Psoas muscle (tissue), 8 donors: ENCODE measurements at regions of chr1 and their contacts with region 1.

Region 1: DNA sequence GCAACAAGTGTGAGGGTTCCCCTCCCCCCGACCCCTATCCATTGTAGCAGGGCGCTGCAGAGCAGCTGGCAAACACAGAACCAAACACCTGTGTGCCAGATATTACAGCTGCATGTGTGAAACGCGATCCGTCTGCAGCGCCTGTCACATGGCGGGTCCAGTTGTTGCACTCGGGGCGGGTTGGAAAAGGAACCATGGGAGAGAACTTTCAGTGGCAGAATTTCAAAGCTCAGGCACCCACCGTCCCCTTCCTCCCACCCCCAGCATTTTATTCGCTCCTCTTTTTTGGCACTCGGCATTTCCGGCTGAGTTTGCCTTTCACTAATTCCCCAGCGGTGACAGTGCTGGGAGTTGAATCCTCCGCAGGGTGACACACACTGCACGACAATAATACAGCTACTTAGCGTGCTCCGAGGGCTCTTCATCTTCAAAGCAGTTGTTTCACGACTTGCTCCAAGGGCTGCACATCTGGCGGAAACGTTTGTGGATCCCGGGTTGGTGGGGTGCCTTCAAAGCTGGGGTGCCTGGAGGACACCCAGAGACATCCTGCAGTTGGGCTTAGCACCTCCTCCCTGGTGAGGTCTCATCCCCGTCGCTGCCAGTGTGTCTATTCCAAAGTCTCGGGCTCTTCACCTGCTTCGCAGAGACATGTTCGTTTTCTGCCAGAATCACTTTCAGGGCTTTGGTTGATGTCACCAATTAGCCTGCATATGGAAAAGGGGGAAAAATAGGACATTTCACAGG is 180.7 kb downstream of the ZBTB18 start:
- DNase-seq: peak; percentile 58 to 83
- ATAC-seq: peak; percentile 82 to 90 (median 88)
- H3K4me3 ChIP-seq: peak overlapping the region; percentile 52
- H3K27ac ChIP-seq: peak overlapping the region; percentile 89
- H3K4me1 ChIP-seq: peaks cover 20% of the 10 kb centered on the region
- H3K27me3 ChIP-seq: no peaks in the 10 kb centered on the region
- CTCF ChIP-seq: no peak

Region 2: DNA sequence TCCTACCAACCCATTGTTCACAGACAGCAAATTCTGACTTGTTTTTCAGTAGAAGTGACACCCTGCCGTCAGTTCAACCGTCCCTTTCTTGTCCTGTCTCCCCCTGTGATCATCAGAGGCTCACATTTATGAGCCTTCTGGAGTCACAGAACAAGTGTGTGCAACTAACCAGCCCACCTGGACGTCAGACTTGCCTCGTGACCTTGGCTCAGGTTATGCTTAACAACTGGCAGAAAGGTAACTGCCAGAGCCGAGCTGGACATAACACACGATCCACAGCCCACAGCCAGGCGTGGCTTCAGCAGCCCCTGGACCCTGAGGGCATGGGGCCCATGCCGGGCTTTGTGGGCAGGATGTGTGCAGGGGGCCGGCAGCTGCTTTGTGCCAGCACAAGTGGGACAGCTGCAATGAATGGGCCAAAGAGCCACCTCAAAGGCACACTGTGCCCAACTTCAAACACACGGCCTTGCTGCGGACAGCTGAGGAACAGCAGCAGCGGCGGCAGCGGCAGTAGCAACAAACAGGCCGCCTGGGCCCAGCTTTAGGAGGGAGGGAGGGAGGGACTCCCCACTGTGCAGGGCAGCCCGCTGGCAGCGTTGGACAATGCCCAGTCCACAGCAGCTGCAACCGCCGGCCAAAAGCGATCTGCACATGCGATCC is 76.7 kb before region 1 on chr1:
- intact Hi-C with region 1: loop called in 1 of 2 experiments (anchors 5 kb)
- DNase-seq: peak; percentile 40 to 75
- ATAC-seq: peak; percentile 90 to 96 (median 92)
- H3K4me3 ChIP-seq: peak overlapping the region; percentile 44
- H3K27ac ChIP-seq: peak overlapping the region; percentile 89
- H3K4me1 ChIP-seq: peaks cover 15% of the 10 kb centered on the region
- H3K27me3 ChIP-seq: no peaks in the 10 kb centered on the region
- CTCF ChIP-seq: no peak

Region 3: GRCh38 chr1:244171241-244171985 is 60.3 kb before region 1 on chr1:
- intact Hi-C with region 1: no loop called
- DNase-seq: no peak
- ATAC-seq: peak in 3 of 4 donors; percentile 66 to 84 (median 80)
- H3K4me3 ChIP-seq: no peak overlapping the region
- H3K27ac ChIP-seq: peak overlapping the region; percentile 69
- H3K4me1 ChIP-seq: peaks cover 26% of the 10 kb centered on the region
- H3K27me3 ChIP-seq: no peaks in the 10 kb centered on the region
- CTCF ChIP-seq: no peak

Region 4: DNA sequence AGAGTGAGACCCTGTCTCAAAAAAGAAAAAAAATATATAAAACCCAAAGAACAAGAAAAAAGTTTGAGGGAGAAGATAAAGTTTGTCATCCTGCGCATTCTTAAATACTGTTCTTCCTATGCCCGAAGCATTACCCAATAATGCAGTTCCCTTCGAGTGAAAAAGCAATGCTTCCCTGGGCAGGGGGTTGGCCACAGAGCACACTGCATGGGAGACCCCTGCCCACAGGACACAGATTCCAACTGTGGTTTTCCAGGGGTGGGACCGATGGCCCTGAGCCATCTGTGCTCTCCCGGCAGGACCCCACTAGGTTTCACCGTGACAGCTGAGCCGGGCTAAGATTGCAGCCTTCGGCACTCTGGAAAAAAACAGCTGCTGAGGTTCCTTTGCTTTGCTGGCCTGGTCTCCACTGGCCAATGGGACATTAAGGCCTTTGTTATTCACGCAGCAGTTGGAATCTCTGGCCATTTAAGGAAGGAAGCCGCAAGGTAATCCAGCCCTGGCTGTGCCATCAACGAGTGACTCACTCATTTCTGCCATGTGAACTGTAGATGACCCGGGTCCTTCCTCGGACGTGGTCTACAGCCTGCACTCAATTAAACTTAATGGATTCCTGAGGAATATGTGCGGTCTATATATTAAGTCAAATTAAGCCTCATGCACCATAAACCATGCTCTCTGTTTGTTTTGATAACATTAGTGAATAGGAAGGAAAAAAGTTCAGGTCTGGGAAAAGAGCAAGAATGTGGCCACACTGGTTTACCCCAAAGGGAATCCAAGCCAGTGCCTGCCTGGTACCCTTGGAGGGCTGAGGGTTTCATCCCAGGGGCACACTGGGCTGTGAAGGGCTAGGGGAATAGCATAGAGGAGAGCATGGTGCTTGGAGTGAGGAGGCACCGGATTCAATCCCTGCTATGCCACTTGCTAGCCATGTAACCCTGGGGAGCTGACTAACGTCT is 17.5 kb before region 1 on chr1:
- intact Hi-C with region 1: loop called in 1 of 2 experiments (anchors 1 kb)
- DNase-seq: peak; percentile 50 to 73
- ATAC-seq: peak; percentile 83 to 92 (median 89)
- H3K4me3 ChIP-seq: no peak overlapping the region
- H3K27ac ChIP-seq: peak overlapping the region; percentile 84
- H3K4me1 ChIP-seq: peaks cover 43% of the 10 kb centered on the region
- H3K27me3 ChIP-seq: no peaks in the 10 kb centered on the region
- CTCF ChIP-seq: no peak